ENCODE measurements at regions of chr5 and their contacts with region 1.

Region 1: DNA sequence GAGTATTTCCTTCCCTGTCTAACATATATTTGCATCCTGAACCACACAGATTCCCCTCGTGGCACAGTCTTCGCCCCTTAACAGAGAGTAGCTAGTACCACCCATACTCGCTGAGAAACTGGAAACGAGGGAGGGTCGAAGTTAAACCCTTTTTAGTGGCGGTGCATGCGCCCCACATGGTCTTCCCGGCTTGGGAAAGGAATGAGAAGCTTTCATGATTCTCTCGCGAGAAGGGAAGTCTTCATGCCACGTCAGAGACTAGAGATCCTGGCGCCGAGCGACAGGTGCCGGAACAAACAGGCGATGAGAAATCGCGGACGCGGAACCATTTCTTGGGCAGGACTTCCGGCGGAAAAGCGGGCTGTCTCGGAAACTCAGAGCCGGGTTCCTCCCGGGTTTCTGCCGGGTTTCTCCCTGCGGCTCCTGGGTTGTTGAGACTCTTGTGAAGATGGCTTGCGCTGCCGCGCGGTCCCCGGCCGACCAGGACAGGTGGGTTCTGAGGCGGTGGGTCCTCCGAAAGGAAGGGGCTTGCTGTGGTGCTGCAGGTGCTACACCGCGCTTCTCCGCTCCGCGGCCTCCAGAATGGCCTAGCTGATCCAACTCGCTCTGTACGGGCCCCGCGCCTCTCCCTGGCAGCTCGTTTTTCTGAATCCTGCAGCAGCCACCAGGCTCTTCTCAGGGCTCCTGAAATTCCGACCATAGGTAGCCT is at the start of gene SRP19:
- DNase-seq: peak; percentile 94
- ATAC-seq: peak; percentile 94
- H3K4me3 Mint-ChIP-seq: peak within 1 kb of the TSS; percentile 96
- H3K27ac Mint-ChIP-seq: peak within 1 kb of the TSS; percentile 98
- H3K4me1 Mint-ChIP-seq: peaks cover 25% of the 10 kb centered on the region
- H3K27me3 Mint-ChIP-seq: peaks cover 9% of the 10 kb centered on the region
- CTCF ChIP-seq: no peak
- total RNA-seq, gene SRP19: 45.6 to 47.0 TPM

Region 2: GRCh38 chr5:112848116-112848811 is 12.8 kb before region 1 on chr5:
- CTCF ChIA-PET with region 1: interaction called, 34 read pairs
- POLR2A ChIA-PET with region 1: interaction called, 9 read pairs
- intact Hi-C with region 1: no loop called
- DNase-seq: peak; percentile 22
- ATAC-seq: peak; percentile 100
- H3K4me3 Mint-ChIP-seq: no peak overlapping the region
- H3K27ac Mint-ChIP-seq: peak overlapping the region; percentile 6
- H3K4me1 Mint-ChIP-seq: peaks cover 4% of the 10 kb centered on the region
- H3K27me3 Mint-ChIP-seq: peaks cover 3% of the 10 kb centered on the region
- CTCF ChIP-seq: peak; percentile 71

Region 3: DNA sequence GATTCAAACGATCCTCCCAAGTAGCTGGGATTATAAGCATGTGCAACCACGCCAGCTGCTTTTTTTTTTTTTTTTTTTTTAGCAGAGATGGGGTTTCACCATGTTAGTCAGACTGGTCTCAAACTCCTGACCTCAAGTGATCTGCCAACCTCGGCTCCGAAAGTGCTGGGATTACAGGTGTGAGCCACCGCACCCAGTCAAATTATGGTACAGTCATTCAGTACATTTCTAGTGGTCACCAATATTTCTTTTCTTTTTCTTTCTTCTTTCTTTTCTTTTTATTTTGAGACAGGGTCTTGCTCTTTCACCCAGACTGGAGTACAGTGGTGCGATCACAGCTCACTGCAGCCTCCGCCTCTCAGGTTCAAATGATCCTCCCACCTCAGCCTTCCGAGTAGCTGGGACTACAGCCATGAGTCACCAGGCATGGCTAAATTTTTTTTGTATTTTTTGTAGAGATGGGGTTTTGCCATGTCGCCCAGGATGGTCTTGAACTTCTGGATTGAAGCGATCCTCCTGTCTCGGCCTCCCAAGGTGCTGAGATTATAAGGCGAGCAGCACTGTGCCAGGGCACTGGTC is 90.1 kb after region 1 on chr5:
- CTCF ChIA-PET with region 1: no interaction called
- POLR2A ChIA-PET with region 1: no interaction called
- intact Hi-C with region 1: no loop called
- DNase-seq: peak; percentile 63
- ATAC-seq: peak; percentile 76
- H3K4me3 Mint-ChIP-seq: no peak overlapping the region
- H3K27ac Mint-ChIP-seq: no peak overlapping the region
- H3K4me1 Mint-ChIP-seq: no peaks in the 10 kb centered on the region
- H3K27me3 Mint-ChIP-seq: no peaks in the 10 kb centered on the region
- CTCF ChIP-seq: no peak

Measured in activated CD8-positive, alpha-beta T cell treated with anti-CD3 and anti-CD28 coated beads for 36 hours (primary cell).